ENCODE measurements at regions of chr1 and their contacts with region 1.

Region 1: GRCh38 chr1:204806943-204807687 is 63.5 kb upstream of the NFASC start:
- DNase-seq: peak; percentile 57
- ATAC-seq: peak; percentile 96
- H3K4me3 ChIP-seq: peak overlapping the region; percentile 38
- H3K27ac ChIP-seq: no peak overlapping the region
- H3K4me1 ChIP-seq: no peaks in the 10 kb centered on the region
- H3K27me3 ChIP-seq: no peaks in the 10 kb centered on the region; the same call in 1 of the 2 replicates
- CTCF ChIP-seq: peak; percentile 85
- POLR2A ChIP-seq: no peak
- RAD21 ChIP-seq: peak; percentile 64

Region 2: DNA sequence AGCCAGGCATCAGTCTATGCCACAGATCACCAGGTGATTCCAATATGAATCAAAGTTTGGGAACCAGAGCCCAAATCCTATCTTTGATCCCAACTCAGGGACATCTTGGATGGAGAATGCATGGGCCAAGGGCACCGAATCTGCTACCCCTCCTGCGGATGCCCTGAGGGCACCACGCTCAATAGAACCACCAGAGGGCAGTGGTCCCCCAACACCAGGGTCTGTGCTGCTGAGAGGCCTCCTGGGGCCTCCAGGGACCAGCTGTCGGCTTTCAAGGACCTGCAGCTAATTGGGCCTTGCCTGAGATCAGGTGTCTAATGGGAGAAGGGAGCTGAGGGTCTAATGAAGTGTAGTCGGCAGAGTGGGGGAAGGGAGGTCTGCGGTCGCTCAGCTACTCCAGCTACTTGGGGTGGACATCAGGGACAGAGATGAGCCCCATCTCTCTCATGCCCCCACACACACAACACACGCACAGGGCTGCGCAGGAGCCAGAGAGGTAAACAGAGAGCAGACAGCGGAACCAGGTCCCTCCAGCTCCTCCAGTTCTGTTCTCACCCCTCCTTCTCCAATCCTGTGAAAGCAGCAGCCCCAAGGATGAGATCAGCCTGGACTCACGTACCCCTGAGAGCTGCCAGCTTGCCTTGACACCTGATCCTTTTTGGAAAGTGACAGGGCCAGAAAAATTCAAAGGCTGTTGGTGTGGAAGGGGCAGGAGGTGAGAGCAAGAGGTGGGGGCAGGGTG is 360.6 kb before region 1 on chr1:
- CTCF ChIA-PET with region 1: interaction called, 3 read pairs
- POLR2A ChIA-PET with region 1: no interaction called
- dilution Hi-C with region 1: no loop called
- in situ Hi-C with region 1: no loop called
- intact Hi-C with region 1: loop called (anchors 2 kb)
- DNase-seq: peak; percentile 62
- ATAC-seq: peak; percentile 96
- H3K4me3 ChIP-seq: no peak overlapping the region
- H3K27ac ChIP-seq: no peak overlapping the region
- H3K4me1 ChIP-seq: no peaks in the 10 kb centered on the region
- H3K27me3 ChIP-seq: no peaks in the 10 kb centered on the region
- CTCF ChIP-seq: peak; percentile 84
- POLR2A ChIP-seq: no peak
- RAD21 ChIP-seq: peak; percentile 83

Region 3: DNA sequence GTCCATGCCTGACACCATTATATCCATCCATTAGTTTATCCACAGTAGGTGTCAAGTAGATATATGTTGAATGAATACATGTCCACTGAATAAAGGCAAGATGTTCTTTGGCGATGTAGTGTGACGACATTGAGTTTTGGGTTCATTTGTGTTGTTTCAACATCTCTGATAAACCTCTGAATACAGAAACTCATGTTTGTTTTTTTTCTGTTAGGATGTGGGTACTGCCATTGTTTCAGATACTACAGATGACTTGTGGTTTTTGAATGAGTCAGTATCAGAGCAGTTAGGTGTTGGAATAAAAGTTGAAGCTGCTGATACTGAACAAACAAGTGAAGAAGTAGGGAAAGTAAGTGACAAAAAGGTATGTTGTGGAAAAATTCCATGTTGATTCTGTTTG is 262.8 kb before region 1 on chr1:
- CTCF ChIA-PET with region 1: interaction called, 12 read pairs
- POLR2A ChIA-PET with region 1: no interaction called
- dilution Hi-C with region 1: no loop called
- in situ Hi-C with region 1: no loop called
- intact Hi-C with region 1: no loop called
- DNase-seq: peak; percentile 54
- ATAC-seq: no peak; the same call in 1 of the 2 replicates
- H3K4me3 ChIP-seq: no peak overlapping the region
- H3K27ac ChIP-seq: no peak overlapping the region
- H3K4me1 ChIP-seq: no peaks in the 10 kb centered on the region
- H3K27me3 ChIP-seq: no peaks in the 10 kb centered on the region
- CTCF ChIP-seq: no peak
- POLR2A ChIP-seq: no peak
- RAD21 ChIP-seq: no peak

Region 4: DNA sequence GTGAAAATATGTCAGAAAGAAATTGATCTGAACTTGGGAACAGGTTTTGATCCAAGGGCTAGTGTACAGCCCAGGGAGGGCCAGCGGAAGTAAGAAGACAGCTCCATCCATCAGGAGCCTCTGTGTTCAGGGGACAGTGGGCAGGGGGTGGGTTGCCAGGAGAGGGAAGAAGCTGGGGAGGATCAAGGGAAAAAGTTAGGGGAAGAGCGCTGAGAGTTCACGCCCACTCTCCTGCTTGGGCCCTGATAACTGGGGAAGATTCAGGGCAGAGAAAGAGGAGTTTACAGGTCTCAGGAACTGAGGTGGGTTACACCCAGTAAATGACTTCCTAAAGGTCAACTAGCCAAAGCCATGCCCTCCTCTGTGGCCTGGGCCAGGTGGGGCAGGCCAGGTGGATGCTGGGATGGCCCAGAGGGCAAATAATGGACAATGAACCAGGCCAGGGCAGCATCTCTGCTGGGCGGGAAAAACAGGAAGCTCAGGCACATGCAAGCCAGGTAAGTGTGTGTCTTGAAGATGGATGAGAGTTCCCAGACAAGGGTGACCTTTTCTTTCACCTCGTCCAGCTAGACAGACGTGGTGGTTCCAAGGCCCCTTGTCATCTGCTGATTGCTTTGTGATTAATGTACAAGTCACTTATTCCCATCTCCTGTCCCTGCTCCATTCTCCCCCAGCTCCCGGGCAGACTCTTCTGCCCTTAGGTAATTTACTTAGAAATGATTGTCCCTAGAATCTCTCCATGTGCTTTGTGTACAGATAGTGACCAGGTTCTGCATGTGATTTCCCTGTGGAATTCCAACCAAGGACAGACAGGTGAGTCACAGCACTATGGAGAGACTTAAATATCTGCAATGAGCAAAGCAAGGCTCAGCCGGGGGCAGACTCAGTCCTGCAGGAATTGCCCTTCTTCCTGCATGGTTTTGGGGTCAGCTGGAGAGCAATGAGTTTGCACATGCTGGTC is 233.9 kb before region 1 on chr1:
- CTCF ChIA-PET with region 1: interaction called, 19 read pairs
- POLR2A ChIA-PET with region 1: no interaction called
- dilution Hi-C with region 1: no loop called
- in situ Hi-C with region 1: loop called (anchors 5 kb)
- intact Hi-C with region 1: no loop called
- DNase-seq: peak; percentile 63
- ATAC-seq: no peak
- H3K4me3 ChIP-seq: no peak overlapping the region
- H3K27ac ChIP-seq: no peak overlapping the region
- H3K4me1 ChIP-seq: no peaks in the 10 kb centered on the region
- H3K27me3 ChIP-seq: peaks cover 10% of the 10 kb centered on the region
- CTCF ChIP-seq: no peak
- POLR2A ChIP-seq: no peak
- RAD21 ChIP-seq: no peak

Region 5: GRCh38 chr1:204819495-204819894 is 12.4 kb after region 1 on chr1:
- CTCF ChIA-PET with region 1: interaction called, 18 read pairs
- POLR2A ChIA-PET with region 1: no interaction called
- dilution Hi-C with region 1: no loop called
- in situ Hi-C with region 1: no loop called
- intact Hi-C with region 1: no loop called
- DNase-seq: no peak
- ATAC-seq: no peak
- H3K4me3 ChIP-seq: no peak overlapping the region
- H3K27ac ChIP-seq: no peak overlapping the region
- H3K4me1 ChIP-seq: no peaks in the 10 kb centered on the region
- H3K27me3 ChIP-seq: peaks cover 3% of the 10 kb centered on the region
- CTCF ChIP-seq: no peak
- POLR2A ChIP-seq: no peak
- RAD21 ChIP-seq: no peak

Region 6: DNA sequence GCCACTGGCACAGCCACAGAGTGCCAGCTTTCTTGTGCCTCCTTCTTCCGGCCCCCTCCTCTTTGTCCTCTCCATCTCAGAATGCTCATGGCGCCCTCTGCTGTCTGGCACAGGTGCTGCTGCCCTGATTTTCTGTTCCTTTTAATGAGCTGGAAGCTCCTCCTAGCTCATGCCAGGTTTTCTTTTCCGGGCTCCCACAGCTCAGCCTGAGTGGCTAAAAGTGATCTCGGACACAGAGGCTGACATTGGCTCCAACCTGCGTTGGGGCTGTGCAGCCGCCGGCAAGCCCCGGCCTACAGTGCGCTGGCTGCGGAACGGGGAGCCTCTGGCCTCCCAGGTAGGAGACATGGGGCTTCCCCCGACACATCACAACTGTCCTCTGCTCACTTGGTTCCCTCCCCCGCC is 254.6 kb after region 1 on chr1:
- CTCF ChIA-PET with region 1: no interaction called
- POLR2A ChIA-PET with region 1: no interaction called
- dilution Hi-C with region 1: no loop called
- in situ Hi-C with region 1: no loop called
- intact Hi-C with region 1: loop called (anchors 1 kb)
- DNase-seq: peak; percentile 52
- ATAC-seq: peak; percentile 93
- H3K4me3 ChIP-seq: no peak overlapping the region
- H3K27ac ChIP-seq: no peak overlapping the region
- H3K4me1 ChIP-seq: no peaks in the 10 kb centered on the region
- H3K27me3 ChIP-seq: peaks cover 15% of the 10 kb centered on the region
- CTCF ChIP-seq: peak; percentile 82
- POLR2A ChIP-seq: no peak
- RAD21 ChIP-seq: peak; percentile 72

Region 7: GRCh38 chr1:205273551-205273982 is 466.5 kb after region 1 on chr1:
- CTCF ChIA-PET with region 1: no interaction called
- POLR2A ChIA-PET with region 1: no interaction called
- dilution Hi-C with region 1: no loop called
- in situ Hi-C with region 1: loop called (anchors 25 kb)
- intact Hi-C with region 1: no loop called
- DNase-seq: peak; percentile 76
- ATAC-seq: peak; percentile 88
- H3K4me3 ChIP-seq: no peak overlapping the region
- H3K27ac ChIP-seq: no peak overlapping the region; the same call in 1 of the 2 replicates
- H3K4me1 ChIP-seq: peaks cover 15% of the 10 kb centered on the region
- H3K27me3 ChIP-seq: no peaks in the 10 kb centered on the region
- CTCF ChIP-seq: peak; percentile 97
- POLR2A ChIP-seq: peak; percentile 43; the same call in 1 of the 2 replicates
- RAD21 ChIP-seq: peak; percentile 97

Measured in IMR-90 (cell line).